ENCODE measurements at regions of chr1 and their contacts with region 1.

Region 1: DNA sequence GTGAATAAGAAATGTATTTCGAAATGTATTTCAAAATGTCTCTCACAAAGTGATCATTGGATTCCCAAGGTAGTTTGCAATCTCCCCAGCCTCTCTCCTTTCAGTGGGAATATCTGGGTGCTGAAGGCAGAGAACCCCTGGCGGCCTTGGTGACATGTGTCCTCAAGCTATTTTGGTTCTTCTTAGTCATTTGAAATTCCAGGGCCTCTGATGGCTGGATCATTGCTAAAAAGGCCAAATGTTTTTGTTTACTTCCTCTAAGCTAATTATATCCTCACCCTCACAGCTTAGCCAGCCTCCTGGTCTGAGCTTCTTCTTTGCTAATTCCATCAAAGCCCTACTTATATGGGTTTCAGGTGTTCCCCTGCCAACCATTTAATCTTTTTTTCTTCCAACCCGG is 71.2 kb downstream of the LRRC40 start:
- DNase-seq: no peak
- ATAC-seq: no peak

Region 2: DNA sequence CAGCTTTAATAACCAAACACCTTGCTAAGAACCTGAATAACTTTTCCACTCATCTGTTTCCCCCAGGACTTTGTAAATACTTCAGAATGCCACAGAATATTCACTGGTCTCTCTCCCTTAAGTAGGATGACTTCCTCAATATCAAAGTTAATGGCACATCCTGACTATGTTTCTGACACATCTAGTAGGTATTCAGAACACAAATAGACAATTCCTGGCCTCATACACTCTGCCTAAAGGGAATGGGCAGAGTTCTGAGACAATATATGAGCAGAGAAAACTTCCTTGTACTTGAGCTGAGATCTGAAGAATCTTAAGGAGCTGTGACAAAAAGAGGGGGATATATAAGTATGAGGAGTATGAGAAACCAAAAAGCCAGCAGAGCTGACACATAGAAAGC is 185.6 kb after region 1 on chr1:
- intact Hi-C with region 1: no loop called
- DNase-seq: no peak
- ATAC-seq: no peak

Region 3: GRCh38 chr1:70509996-70510876 is 376.1 kb after region 1 on chr1:
- intact Hi-C with region 1: loop called (anchors 10 kb)
- DNase-seq: no peak
- ATAC-seq: peak; percentile 93